Motor neuron (in vitro differentiated cells): ENCODE measurements at regions of chr16 and their contacts with region 1.

Region 1: DNA sequence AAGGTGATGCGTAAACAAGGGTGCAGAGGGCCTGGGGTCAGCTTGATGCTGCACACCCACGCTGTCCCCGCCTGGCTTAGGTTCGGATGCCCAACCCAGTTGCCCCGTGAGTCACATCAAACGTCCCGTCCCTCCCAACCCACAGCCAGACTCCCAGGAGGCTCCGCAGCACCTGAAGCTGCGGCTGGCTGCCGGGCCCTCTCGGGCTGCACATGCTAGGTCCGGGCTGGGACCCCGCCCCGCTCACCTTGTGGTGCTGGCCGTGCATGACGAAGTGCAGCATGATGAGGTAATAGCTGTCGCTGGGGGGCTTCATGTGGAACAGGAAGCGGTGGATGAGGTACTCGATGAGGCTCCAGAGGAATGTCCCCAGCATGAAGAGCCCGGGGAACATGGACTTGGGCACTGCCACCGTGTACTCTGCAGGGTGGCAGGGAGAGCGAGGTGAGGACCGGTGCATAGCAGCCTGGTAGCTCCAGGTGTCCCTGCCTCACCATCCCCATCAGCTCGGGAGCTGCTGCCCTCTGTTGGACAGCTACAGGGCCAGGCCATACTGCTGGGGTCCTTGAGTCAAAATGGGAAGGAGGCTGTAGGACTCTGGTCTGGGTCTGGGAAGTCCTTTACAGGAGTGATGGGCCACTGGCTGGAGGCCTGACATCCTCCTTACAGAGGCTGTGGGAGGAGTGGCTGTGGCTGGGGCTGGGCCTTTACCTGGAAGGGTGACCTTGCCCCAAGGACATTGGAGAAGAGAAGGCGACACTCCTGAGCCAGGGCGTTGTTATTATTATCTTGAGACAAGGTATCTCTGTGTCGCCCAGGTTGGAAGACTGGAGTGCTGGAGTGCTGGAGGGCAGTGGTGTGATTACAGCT is 18.3 kb upstream of the MLKL start:
- ATAC-seq: no peak
- H3K4me3 ChIP-seq: no peak overlapping the region
- H3K27ac ChIP-seq: no peak overlapping the region
- H3K4me1 ChIP-seq: peaks cover 0 to under 1% of the 10 kb centered on the region in 2 donors

Region 2: GRCh38 chr16:74852500-74852875 is 133.5 kb after region 1 on chr16:
- in situ Hi-C with region 1: loop called in 6 of 9 experiments (anchors 10 to 25 kb)
- ATAC-seq: no peak
- H3K4me3 ChIP-seq: no peak overlapping the region
- H3K27ac ChIP-seq: no peak overlapping the region
- H3K4me1 ChIP-seq: no peaks in the 10 kb centered on the region

Region 3: GRCh38 chr16:75138636-75139035 is 419.7 kb after region 1 on chr16:
- in situ Hi-C with region 1: no loop called
- ATAC-seq: no peak
- H3K4me3 ChIP-seq: no peak overlapping the region
- H3K27ac ChIP-seq: no peak overlapping the region
- H3K4me1 ChIP-seq: no peaks in the 10 kb centered on the region